IMR-90 (cell line): ENCODE measurements at regions of chr1 and their contacts with region 1.

Region 1: GRCh38 chr1:108897865-108898720 is 21.3 kb downstream of the GPSM2 start:
- DNase-seq: peak; percentile 79
- ATAC-seq: peak; percentile 80
- H3K4me3 ChIP-seq: no peak overlapping the region
- H3K27ac ChIP-seq: no peak overlapping the region
- H3K4me1 ChIP-seq: peaks cover 4% of the 10 kb centered on the region
- H3K27me3 ChIP-seq: no peaks in the 10 kb centered on the region
- CTCF ChIP-seq: peak; percentile 87
- POLR2A ChIP-seq: no peak
- RAD21 ChIP-seq: peak; percentile 84

Region 2: DNA sequence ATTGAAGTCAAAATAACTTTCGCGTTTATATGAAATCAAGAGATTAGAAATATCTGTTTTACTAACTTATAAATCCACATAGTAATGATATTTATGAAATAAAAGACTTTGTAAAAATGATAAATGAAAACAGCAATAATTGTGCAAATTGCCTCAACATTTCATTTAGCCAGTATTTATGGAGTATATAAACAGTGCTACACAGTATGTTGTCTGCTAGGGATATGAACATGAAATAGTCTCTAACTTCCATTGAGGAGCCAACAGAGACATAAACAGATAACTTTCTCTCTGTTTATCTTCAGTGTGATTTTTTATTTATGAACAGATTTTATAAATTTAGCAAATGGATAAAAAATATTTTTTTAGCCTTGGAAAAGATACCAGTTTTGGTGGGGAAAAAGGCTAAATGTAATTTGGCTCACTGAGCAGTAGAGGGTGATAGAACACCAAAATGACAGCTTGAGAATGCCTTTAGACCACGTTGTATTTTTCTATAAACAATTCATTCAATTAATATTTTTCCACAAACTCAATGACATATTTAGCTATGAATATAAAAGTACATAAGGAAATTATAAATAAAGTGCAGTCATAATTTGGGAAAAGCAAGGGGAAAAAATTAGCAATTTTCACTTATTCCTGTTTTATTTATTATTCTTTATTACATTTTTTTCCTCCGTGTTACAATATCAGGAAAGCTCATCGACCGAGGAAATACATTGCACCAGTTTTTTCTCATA is 385.7 kb before region 1 on chr1:
- CTCF ChIA-PET with region 1: interaction called, 3 read pairs
- POLR2A ChIA-PET with region 1: no interaction called
- dilution Hi-C with region 1: no loop called
- in situ Hi-C with region 1: loop called (anchors 10 kb)
- intact Hi-C with region 1: loop called (anchors 1 kb)
- DNase-seq: peak; percentile 50
- ATAC-seq: peak; percentile 82
- H3K4me3 ChIP-seq: no peak overlapping the region
- H3K27ac ChIP-seq: no peak overlapping the region
- H3K4me1 ChIP-seq: no peaks in the 10 kb centered on the region
- H3K27me3 ChIP-seq: peaks cover 9% of the 10 kb centered on the region
- CTCF ChIP-seq: peak; percentile 94
- POLR2A ChIP-seq: no peak
- RAD21 ChIP-seq: peak; percentile 93

Region 3: GRCh38 chr1:108691942-108692723 is 206.0 kb before region 1 on chr1 and contains the start of gene PRPF38B:
- CTCF ChIA-PET with region 1: interaction called, 6 read pairs
- POLR2A ChIA-PET with region 1: no interaction called
- dilution Hi-C with region 1: no loop called
- in situ Hi-C with region 1: loop called (anchors 10 kb)
- intact Hi-C with region 1: loop called (anchors 1 kb)
- DNase-seq: peak; percentile 87
- ATAC-seq: peak; percentile 97
- H3K4me3 ChIP-seq: peak within 1 kb of the TSS; percentile 84
- H3K27ac ChIP-seq: peak within 1 kb of the TSS; percentile 97
- H3K4me1 ChIP-seq: no peaks in the 10 kb centered on the region
- H3K27me3 ChIP-seq: no peaks in the 10 kb centered on the region
- CTCF ChIP-seq: no peak
- POLR2A ChIP-seq: peak; percentile 97
- RAD21 ChIP-seq: no peak
- total RNA-seq, gene PRPF38B: 9.0 and 15.0 TPM in 2 replicates

Region 4: GRCh38 chr1:108746372-108747205 is 151.5 kb before region 1 on chr1 and contains the start of gene STXBP3:
- CTCF ChIA-PET with region 1: no interaction called
- POLR2A ChIA-PET with region 1: interaction called, 3 read pairs
- dilution Hi-C with region 1: no loop called
- in situ Hi-C with region 1: no loop called
- intact Hi-C with region 1: loop called (anchors 2 kb)
- DNase-seq: peak; percentile 98
- ATAC-seq: peak; percentile 95
- H3K4me3 ChIP-seq: peak within 1 kb of the TSS; percentile 76
- H3K27ac ChIP-seq: peak within 1 kb of the TSS; percentile 86
- H3K4me1 ChIP-seq: no peaks in the 10 kb centered on the region
- H3K27me3 ChIP-seq: peaks cover 4% of the 10 kb centered on the region; the same call in 1 of the 2 replicates
- CTCF ChIP-seq: peak; percentile 95
- POLR2A ChIP-seq: peak; percentile 92
- RAD21 ChIP-seq: peak; percentile 49
- total RNA-seq, gene STXBP3: 19.7 and 38.3 TPM in 2 replicates

Region 5: DNA sequence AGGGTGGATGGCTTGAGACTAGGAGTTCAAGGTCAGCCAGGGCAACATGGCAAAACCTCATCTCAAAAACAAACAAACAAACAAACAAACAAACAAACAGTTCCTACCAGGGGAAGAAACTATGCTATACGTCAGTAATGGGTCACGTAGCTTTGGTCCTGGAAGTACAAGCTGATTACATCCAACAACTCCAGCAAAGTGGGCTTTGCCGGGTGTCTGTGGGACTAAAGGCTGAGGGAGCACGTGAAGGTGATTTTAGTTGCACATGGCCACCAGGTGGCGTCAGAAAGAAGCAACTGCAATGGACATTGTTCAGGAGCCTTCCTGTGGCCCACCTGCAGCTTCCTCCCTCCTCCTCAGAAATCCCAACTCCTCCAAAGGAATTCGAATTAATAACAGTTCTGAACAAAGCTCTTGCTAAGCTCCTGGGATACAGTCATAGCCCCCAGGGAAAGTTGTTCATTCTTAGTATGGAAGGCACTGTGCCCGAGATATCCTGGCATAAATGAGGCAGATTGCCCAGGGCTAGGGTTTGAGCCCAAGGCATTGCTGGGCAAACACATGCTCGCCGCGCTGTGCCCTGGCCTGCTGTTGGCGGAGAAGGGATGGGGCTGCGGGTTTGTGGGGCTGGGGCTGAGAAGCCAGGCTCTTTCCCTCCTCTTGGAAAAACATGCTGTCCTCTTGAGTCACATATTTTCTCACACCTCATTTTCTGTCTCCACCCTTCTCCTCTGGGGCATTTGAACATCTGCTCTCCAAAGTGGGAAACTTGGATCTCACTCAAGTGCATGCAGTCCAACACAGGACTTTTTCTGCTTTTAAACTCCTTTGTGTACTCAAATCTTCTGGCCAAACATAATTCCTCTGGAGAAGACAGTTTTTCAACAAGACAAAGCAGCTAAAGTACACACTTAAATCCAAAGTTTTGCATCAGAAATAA is 69.8 kb before region 1 on chr1:
- CTCF ChIA-PET with region 1: interaction called, 23 read pairs
- POLR2A ChIA-PET with region 1: interaction called, 4 read pairs
- dilution Hi-C with region 1: no loop called
- in situ Hi-C with region 1: loop called (anchors 5 kb)
- intact Hi-C with region 1: loop called (anchors 1 kb)
- DNase-seq: peak; percentile 85
- ATAC-seq: peak; percentile 33
- H3K4me3 ChIP-seq: no peak overlapping the region
- H3K27ac ChIP-seq: peak overlapping the region; percentile 45; the same call in 1 of the 2 replicates
- H3K4me1 ChIP-seq: peaks cover 18% of the 10 kb centered on the region
- H3K27me3 ChIP-seq: no peaks in the 10 kb centered on the region
- CTCF ChIP-seq: peak; percentile 68
- POLR2A ChIP-seq: no peak
- RAD21 ChIP-seq: peak; percentile 73

Region 6: DNA sequence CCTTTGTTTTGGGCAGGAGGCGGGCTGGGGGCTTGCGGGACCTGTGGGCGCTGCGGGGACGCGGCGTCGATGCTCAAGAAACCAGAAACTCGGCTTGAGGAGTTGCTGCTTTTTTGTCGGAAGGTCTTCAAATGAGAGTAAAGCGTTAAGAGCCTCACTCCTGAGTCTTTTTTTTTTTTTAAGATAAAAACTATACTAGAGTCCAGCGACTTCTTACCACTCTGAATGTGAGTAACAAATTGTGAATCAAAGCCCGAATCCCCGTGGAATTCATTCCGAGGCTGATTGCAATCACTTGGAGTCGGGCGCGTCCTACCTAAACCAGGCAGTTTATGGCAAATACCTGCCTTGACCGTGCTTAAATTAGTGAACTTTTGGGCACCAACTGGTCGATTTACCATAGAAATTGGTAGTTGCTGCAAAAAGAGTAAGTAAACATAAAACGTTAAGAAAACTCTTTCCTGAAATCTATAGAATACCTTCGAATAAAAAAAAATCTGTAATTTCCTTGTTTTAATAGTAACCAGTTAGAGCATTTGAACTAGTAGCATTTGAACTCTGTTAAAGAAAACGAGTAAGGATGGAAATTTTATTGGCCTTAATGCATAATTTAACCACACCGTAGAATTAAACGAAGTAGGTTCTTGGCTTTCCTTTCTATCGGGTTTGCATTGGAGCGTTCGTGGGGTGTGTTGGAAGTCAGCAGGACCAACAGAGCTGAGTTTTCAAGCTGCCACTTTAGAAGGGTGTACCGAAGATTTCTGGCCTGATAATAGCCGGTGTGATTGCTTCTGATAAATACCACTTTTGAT is 20.5 kb before region 1 on chr1:
- CTCF ChIA-PET with region 1: no interaction called
- POLR2A ChIA-PET with region 1: no interaction called
- dilution Hi-C with region 1: no loop called
- in situ Hi-C with region 1: no loop called
- intact Hi-C with region 1: loop called (anchors 2 kb)
- DNase-seq: peak; percentile 30
- ATAC-seq: peak; percentile 16
- H3K4me3 ChIP-seq: peak overlapping the region; percentile 83
- H3K27ac ChIP-seq: peak overlapping the region; percentile 53
- H3K4me1 ChIP-seq: no peaks in the 10 kb centered on the region; the same call in 1 of the 2 replicates
- H3K27me3 ChIP-seq: no peaks in the 10 kb centered on the region
- CTCF ChIP-seq: no peak
- POLR2A ChIP-seq: no peak
- RAD21 ChIP-seq: no peak